Dorsolateral prefrontal cortex (tissue), 120 donors: ENCODE measurements at regions of chr3 and their contacts with region 1.

Region 1: DNA sequence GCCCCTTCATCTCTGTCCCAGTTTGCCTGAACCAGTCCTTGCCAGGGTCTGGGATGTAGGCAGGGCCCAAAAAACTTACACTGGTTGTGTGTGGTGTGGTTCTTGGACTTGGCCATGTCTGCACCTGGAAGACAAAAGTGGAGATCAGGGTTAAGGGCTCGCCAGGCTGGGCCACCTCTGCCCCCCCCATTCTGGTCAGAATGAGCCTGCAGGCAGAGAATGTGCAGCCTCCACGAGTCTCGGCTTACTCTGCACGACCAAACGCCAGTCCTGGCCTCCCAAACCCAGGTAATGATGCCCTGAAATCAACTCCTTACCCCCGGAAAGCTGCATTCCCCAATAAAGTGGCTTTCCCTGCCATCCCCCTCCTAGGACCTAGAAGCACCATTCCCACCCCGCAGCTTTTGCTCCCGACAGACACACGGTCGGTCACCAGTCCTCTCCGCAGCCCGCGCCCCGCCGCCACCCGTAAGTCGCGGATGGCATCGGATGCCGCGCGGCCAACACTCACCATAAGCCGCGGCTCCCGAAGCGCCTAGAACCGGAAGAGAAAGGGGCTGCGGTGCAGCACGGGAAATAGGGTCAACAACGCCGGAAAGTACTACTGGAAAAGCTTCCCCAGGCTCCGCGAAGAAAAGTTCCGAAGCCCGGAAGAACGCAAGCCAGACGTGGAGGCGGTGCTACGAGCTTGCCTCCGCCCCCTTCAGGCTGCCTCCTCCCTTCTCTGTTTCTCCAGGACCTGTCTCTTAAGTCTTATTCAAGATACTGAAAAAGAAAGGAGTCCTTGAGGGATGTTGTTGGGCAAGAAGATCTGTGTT is at the start of gene RPL29:
- DNase-seq: peak; percentile 75 to 92 (median 89)
- H3K4me3 ChIP-seq: peak within 1 kb of the TSS; percentile 52 to 96 (median 78)
- H3K27ac ChIP-seq: peak within 1 kb of the TSS in 58 of 59 donors; percentile 48 to 96 (median 90)
- H3K27me3 ChIP-seq: no peaks in the 10 kb centered on the region
- CTCF ChIP-seq: peak; percentile 41 to 85 (median 71)
- total RNA-seq, gene RPL29: 154 to 416 (median 290) TPM

Region 2: GRCh38 chr3:51949126-51949525 is 46.4 kb before region 1 on chr3:
- intact Hi-C with region 1: no loop called
- DNase-seq: no peak
- H3K4me3 ChIP-seq: no peak overlapping the region
- H3K27ac ChIP-seq: no peak overlapping the region
- H3K27me3 ChIP-seq: no peaks in the 10 kb centered on the region
- CTCF ChIP-seq: no peak

Region 3: GRCh38 chr3:51974963-51975851 is 20.3 kb before region 1 on chr3 and contains the start of gene ABHD14A:
- intact Hi-C with region 1: loop called in 1 of 2 experiments (anchors 2 kb)
- DNase-seq: peak in 9 of 10 donors; percentile 61 to 87 (median 73)
- H3K4me3 ChIP-seq: peak within 1 kb of the TSS; percentile 49 to 91 (median 79)
- H3K27ac ChIP-seq: peak within 1 kb of the TSS; percentile 78 to 100 (median 96)
- H3K27me3 ChIP-seq: no peaks in the 10 kb centered on the region
- CTCF ChIP-seq: peak in 34 of 56 donors; percentile 10 to 52 (median 26)
- total RNA-seq, gene ABHD14A: 31.4 to 85.8 (median 60.7) TPM

Region 4: DNA sequence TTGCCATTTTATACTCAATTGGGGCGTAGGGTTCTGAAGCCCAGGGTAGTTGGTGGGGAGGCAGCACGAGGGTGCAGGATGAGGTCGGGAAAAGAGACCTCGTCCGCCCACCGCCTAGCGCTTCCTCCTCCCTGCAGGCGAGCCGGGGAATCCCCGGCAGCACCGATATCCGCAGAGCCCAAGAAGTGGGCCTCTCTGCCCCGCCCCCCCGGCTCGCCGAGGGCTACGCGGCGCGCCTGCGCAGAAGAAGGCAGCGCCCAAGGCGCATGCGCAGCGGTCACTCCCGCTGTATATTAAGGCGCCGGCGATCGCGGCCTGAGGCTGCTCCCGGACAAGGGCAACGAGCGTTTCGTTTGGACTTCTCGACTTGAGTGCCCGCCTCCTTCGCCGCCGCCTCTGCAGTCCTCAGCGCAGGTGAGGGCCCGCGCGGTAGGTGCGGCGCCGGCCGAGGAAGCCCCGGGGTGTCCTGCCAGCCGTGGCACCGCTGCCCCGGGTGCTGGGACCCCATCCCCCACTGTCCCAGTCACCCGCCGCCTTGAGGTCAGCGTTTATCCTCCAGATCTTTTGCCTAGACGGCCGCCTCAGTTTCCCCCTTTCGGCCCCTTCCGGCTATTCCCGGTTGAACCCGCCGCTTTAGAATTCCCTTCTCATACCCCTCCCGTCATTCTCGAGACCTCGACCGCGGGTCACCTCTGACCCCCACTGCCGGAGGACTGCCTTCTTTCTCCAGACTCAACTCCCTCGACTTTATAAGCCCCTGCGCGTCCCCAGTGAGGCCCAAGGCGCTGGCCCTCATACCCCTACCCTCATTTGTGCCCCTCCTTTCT is 202.5 kb after region 1 on chr3 and contains the start of gene ALAS1:
- intact Hi-C with region 1: loop called in 1 of 2 experiments (anchors 5 kb)
- DNase-seq: peak; percentile 83 to 96 (median 84)
- H3K4me3 ChIP-seq: peak within 1 kb of the TSS; percentile 62 to 100 (median 97)
- H3K27ac ChIP-seq: peak within 1 kb of the TSS in 58 of 59 donors; percentile 75 to 96 (median 89)
- H3K27me3 ChIP-seq: no peaks in the 10 kb centered on the region
- CTCF ChIP-seq: peak in 39 of 56 donors; percentile 8 to 52 (median 31)
- total RNA-seq, gene ALAS1: 34.8 to 81.1 (median 55.4) TPM

Region 5: GRCh38 chr3:52278510-52279069 is 283.0 kb after region 1 on chr3 and contains the start of gene WDR82:
- intact Hi-C with region 1: loop called in 1 of 2 experiments (anchors 10 kb)
- DNase-seq: peak; percentile 91 to 99 (median 98)
- H3K4me3 ChIP-seq: peak within 1 kb of the TSS; percentile 70 to 99 (median 93)
- H3K27ac ChIP-seq: peak within 1 kb of the TSS; percentile 86 to 99 (median 96)
- H3K27me3 ChIP-seq: no peaks in the 10 kb centered on the region
- CTCF ChIP-seq: peak in 51 of 56 donors; percentile 24 to 69 (median 46)
- total RNA-seq, gene WDR82: 61.0 to 123 (median 91.2) TPM